ENCODE measurements at regions of chr6 and their contacts with region 1.

Region 1: GRCh38 chr6:170554013-170554795 is at the start of gene TBP:
- DNase-seq: peak; percentile 97 to 99 (median 98)
- ATAC-seq: peak; percentile 97 to 98 (median 97)
- H3K4me3 ChIP-seq: peak within 1 kb of the TSS; percentile 66 to 98 (median 80)
- H3K27ac ChIP-seq: peak within 1 kb of the TSS; percentile 84 to 98 (median 94)
- H3K4me1 ChIP-seq: peaks cover 14 to 54% (median 47%) of the 10 kb centered on the region in 12 donors
- H3K27me3 ChIP-seq: no peaks in the 10 kb centered on the region
- CTCF ChIP-seq: peak in 1 of 12 donors; percentile 12
- POLR2A ChIP-seq: peak in 1 of 2 donors; percentile 41
- total RNA-seq, gene TBP: 6.5 to 19.1 (median 8.9) TPM

Region 2: GRCh38 chr6:170584181-170584953 is 30.2 kb after region 1 on chr6 and contains the start of gene PDCD2:
- intact Hi-C with region 1: loop called in 3 of 10 experiments (anchors 1 to 2 kb)
- DNase-seq: peak; percentile 93 to 96 (median 95)
- ATAC-seq: peak; percentile 98 to 100 (median 98)
- H3K4me3 ChIP-seq: peak within 1 kb of the TSS; percentile 76 to 100 (median 92)
- H3K27ac ChIP-seq: peak within 1 kb of the TSS; percentile 51 to 94 (median 90)
- H3K4me1 ChIP-seq: peaks cover 0 to 24% (median 11%) of the 10 kb centered on the region in 12 donors
- H3K27me3 ChIP-seq: no peaks in the 10 kb centered on the region
- CTCF ChIP-seq: peak in 1 of 12 donors; percentile 2
- POLR2A ChIP-seq: peak in 1 of 2 donors; percentile 70
- total RNA-seq, gene PDCD2: 29.9 to 51.4 (median 37.4) TPM

Measured in heart left ventricle (tissue), 16 donors.